AG04449 (cell line): ENCODE measurements at regions of chr10 and their contacts with region 1.

Region 1: GRCh38 chr10:28135258-28135657 is 136.4 kb upstream of the ODAD2 start:
- DNase-seq: no peak
- H3K4me3 ChIP-seq: no peak overlapping the region
- CTCF ChIP-seq: no peak

Region 2: GRCh38 chr10:27783660-27784059 is 351.6 kb before region 1 on chr10:
- CTCF ChIA-PET with region 1: interaction called, 14 read pairs
- POLR2A ChIA-PET with region 1: no interaction called
- DNase-seq: peak; percentile 23
- H3K4me3 ChIP-seq: no peak overlapping the region
- CTCF ChIP-seq: peak; percentile 62

Region 3: DNA sequence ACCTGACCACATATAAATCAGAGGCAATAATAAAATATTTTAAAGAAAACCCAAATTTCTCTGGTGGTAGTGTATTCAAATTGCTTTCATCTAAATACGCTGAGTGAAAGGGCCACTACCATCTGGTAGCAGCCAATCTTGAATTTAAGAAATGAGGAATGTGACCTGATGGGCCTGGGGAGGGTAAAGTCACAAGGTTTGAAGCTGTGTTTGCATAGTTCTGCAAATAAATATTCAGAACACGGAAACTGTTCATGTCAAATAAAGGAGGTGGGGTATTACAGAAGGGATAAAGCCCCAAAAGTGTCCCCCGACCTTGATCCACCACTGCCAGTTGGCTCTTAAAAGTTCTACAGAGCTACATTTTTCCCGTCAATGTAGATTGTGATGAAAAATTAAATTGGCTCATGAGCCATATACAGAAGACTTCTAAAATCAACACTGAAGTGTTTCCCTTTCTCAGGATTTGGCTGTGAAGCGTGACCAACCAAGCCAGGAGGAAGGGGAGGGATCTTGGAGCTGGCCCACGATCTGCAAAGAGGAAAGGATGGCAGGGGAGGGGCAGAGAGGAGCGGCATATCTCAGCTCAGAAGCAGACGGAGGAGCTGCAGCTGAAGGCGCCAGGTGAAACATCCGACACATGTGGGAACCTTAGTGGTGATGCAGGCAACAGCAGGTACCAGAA is 128.0 kb after region 1 on chr10:
- CTCF ChIA-PET with region 1: no interaction called
- POLR2A ChIA-PET with region 1: no interaction called
- DNase-seq: no peak
- H3K4me3 ChIP-seq: no peak overlapping the region
- CTCF ChIP-seq: no peak